GM12878 (cell line): ENCODE measurements at regions of chr14 and their contacts with region 1.

Region 1: GRCh38 chr14:62126879-62127478 is 364.8 kb downstream of the SNAPC1 start:
- DNase-seq: no peak
- ATAC-seq: peak; percentile 86
- H3K4me3 ChIP-seq: no peak overlapping the region
- H3K27ac ChIP-seq: no peak overlapping the region
- H3K4me1 ChIP-seq: no peaks in the 10 kb centered on the region
- H3K27me3 ChIP-seq: no peaks in the 10 kb centered on the region; a peak in 1 of 4 replicates
- CTCF ChIP-seq: peak; percentile 71 to 76 (median 72)
- EP300 ChIP-seq: no peak
- POLR2A ChIP-seq: no peak
- RAD21 ChIP-seq: peak; percentile 99

Region 2: DNA sequence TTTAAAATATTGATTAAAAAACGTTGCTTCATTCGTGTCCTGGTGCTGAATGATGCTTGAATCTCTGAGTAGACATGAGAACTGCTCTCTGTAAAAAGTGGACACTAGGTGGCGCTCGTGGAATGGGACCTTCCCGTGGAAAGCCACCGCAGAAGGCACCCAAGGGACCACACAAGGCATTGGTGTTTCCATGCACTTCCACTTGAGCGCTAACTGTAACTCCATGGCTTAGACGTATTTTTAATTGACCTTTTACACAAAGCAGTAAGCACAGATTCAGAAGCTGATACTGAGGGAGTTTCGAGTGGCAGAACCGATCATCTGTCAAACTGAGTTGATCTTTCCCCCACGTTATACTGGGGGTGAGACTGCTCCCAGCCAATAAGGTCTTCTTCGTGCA is 670.3 kb before region 1 on chr14:
- CTCF ChIA-PET with region 1: interaction called, 5 read pairs
- POLR2A ChIA-PET with region 1: no interaction called
- RAD21 ChIA-PET with region 1: no interaction called
- SMC1A ChIA-PET with region 1: no interaction called
- in situ Hi-C with region 1: loop called (anchors 5 kb)
- intact Hi-C with region 1: loop called (anchors 5 kb)
- DNase-seq: no peak
- ATAC-seq: peak; percentile 86
- H3K4me3 ChIP-seq: no peak overlapping the region
- H3K27ac ChIP-seq: no peak overlapping the region
- H3K4me1 ChIP-seq: peaks cover 6% of the 10 kb centered on the region
- H3K27me3 ChIP-seq: no peaks in the 10 kb centered on the region
- CTCF ChIP-seq: peak; percentile 77 to 80 (median 80)
- EP300 ChIP-seq: no peak
- POLR2A ChIP-seq: no peak
- RAD21 ChIP-seq: peak; percentile 73

Region 3: GRCh38 chr14:61860294-61860918 is 266.6 kb before region 1 on chr14:
- CTCF ChIA-PET with region 1: interaction called, 72 read pairs
- POLR2A ChIA-PET with region 1: no interaction called
- RAD21 ChIA-PET with region 1: interaction called, 43 read pairs
- SMC1A ChIA-PET with region 1: interaction called, 38 read pairs
- in situ Hi-C with region 1: no loop called
- intact Hi-C with region 1: loop called (anchors 1 kb)
- DNase-seq: peak; percentile 44
- ATAC-seq: peak; percentile 100
- H3K4me3 ChIP-seq: no peak overlapping the region
- H3K27ac ChIP-seq: no peak overlapping the region
- H3K4me1 ChIP-seq: no peaks in the 10 kb centered on the region
- H3K27me3 ChIP-seq: no peaks in the 10 kb centered on the region
- CTCF ChIP-seq: peak; percentile 84 to 96 (median 87)
- EP300 ChIP-seq: no peak
- POLR2A ChIP-seq: no peak
- RAD21 ChIP-seq: peak; percentile 81

Region 4: GRCh38 chr14:61925043-61925442 is 201.9 kb before region 1 on chr14:
- CTCF ChIA-PET with region 1: interaction called, 206 read pairs
- POLR2A ChIA-PET with region 1: no interaction called
- RAD21 ChIA-PET with region 1: interaction called, 142 read pairs
- SMC1A ChIA-PET with region 1: interaction called, 176 read pairs
- in situ Hi-C with region 1: no loop called
- intact Hi-C with region 1: loop called (anchors 1 kb)
- DNase-seq: no peak
- ATAC-seq: peak; percentile 77
- H3K4me3 ChIP-seq: no peak overlapping the region
- H3K27ac ChIP-seq: no peak overlapping the region
- H3K4me1 ChIP-seq: no peaks in the 10 kb centered on the region
- H3K27me3 ChIP-seq: no peaks in the 10 kb centered on the region; a peak in 1 of 4 replicates
- CTCF ChIP-seq: peak; percentile 35 to 44 (median 41); a peak in 5 of 6 replicates
- EP300 ChIP-seq: no peak
- POLR2A ChIP-seq: no peak
- RAD21 ChIP-seq: peak; percentile 82

Region 5: GRCh38 chr14:62029569-62029924 is 97.4 kb before region 1 on chr14:
- CTCF ChIA-PET with region 1: interaction called, 6 read pairs
- POLR2A ChIA-PET with region 1: no interaction called
- RAD21 ChIA-PET with region 1: interaction called, 6 read pairs
- SMC1A ChIA-PET with region 1: interaction called, 23 read pairs
- in situ Hi-C with region 1: no loop called
- intact Hi-C with region 1: no loop called
- DNase-seq: peak; percentile 16
- ATAC-seq: peak; percentile 72
- H3K4me3 ChIP-seq: no peak overlapping the region
- H3K27ac ChIP-seq: no peak overlapping the region
- H3K4me1 ChIP-seq: peaks cover 21% of the 10 kb centered on the region
- H3K27me3 ChIP-seq: no peaks in the 10 kb centered on the region
- CTCF ChIP-seq: no peak
- EP300 ChIP-seq: no peak
- POLR2A ChIP-seq: no peak
- RAD21 ChIP-seq: no peak

Region 6: GRCh38 chr14:62097072-62097471 is 29.9 kb before region 1 on chr14:
- CTCF ChIA-PET with region 1: interaction called, 5 read pairs
- POLR2A ChIA-PET with region 1: no interaction called
- RAD21 ChIA-PET with region 1: interaction called, 11 read pairs
- SMC1A ChIA-PET with region 1: interaction called, 6 read pairs
- in situ Hi-C with region 1: no loop called
- intact Hi-C with region 1: no loop called
- DNase-seq: no peak
- ATAC-seq: peak; percentile 64
- H3K4me3 ChIP-seq: no peak overlapping the region
- H3K27ac ChIP-seq: no peak overlapping the region
- H3K4me1 ChIP-seq: no peaks in the 10 kb centered on the region
- H3K27me3 ChIP-seq: no peaks in the 10 kb centered on the region
- CTCF ChIP-seq: no peak
- EP300 ChIP-seq: no peak
- POLR2A ChIP-seq: no peak
- RAD21 ChIP-seq: no peak

Region 7: GRCh38 chr14:62189698-62190097 is 62.7 kb after region 1 on chr14:
- CTCF ChIA-PET with region 1: no interaction called
- POLR2A ChIA-PET with region 1: no interaction called
- RAD21 ChIA-PET with region 1: no interaction called
- SMC1A ChIA-PET with region 1: no interaction called
- in situ Hi-C with region 1: no loop called
- intact Hi-C with region 1: no loop called
- DNase-seq: no peak
- ATAC-seq: no peak
- H3K4me3 ChIP-seq: no peak overlapping the region
- H3K27ac ChIP-seq: no peak overlapping the region
- H3K4me1 ChIP-seq: no peaks in the 10 kb centered on the region
- H3K27me3 ChIP-seq: no peaks in the 10 kb centered on the region
- CTCF ChIP-seq: no peak
- EP300 ChIP-seq: no peak
- POLR2A ChIP-seq: no peak
- RAD21 ChIP-seq: no peak